WTC11 (cell line): ENCODE measurements at regions of chr5 and their contacts with region 1.

Region 1: DNA sequence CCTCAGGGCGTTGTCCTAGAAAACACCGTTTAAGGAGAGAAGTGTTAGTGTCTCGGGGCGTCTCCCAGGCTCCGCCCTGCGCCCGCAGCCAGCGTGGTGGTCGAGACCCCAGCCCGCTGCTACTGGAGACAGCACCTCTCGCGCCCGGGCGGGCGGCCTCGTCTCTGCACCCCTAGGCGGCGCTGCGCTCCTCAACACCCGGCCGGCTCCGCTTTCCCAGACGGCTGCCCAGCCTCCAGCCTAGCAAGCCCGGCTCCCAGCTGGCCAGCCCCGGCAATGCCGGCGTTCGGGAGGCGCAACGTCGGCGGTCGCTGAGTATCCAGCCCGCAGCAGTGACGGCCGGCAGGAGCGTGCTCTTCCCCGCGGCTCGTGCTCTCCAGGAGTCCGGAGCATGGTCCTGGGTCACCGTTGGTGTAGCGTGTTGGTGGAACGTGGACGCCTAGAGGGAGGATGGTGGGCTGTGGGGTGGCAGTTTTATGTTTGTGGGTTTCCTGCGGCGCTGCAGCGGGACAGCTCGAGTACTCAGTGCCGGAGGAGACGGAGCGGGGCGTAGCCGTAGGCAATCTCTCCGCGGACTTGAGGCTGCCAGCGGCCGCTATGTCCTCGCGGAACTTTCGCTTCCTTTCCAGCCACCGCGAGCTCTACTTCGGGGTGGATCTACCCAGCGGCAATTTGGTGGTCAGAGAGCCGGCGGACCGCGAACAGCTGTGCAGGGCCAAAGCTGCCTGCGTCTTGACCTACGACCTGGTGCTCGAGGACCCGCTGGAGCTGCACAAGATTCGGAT is 536 bp downstream of the PCDHAC1 start:
- DNase-seq: peak; percentile 98
- ATAC-seq: peak; percentile 86
- H3K4me3 Mint-ChIP-seq: peak overlapping the region; percentile 91
- H3K27ac Mint-ChIP-seq: no peak overlapping the region
- H3K4me1 Mint-ChIP-seq: peaks cover 28% of the 10 kb centered on the region
- H3K27me3 Mint-ChIP-seq: peaks cover 37% of the 10 kb centered on the region
- CTCF ChIP-seq: peak; percentile 87; the same call in 1 of the 2 replicates

Region 2: GRCh38 chr5:140677947-140678346 is 248.7 kb before region 1 on chr5:
- CTCF ChIA-PET with region 1: no interaction called
- POLR2A ChIA-PET with region 1: no interaction called
- DNase-seq: no peak
- ATAC-seq: no peak
- H3K4me3 Mint-ChIP-seq: no peak overlapping the region
- H3K27ac Mint-ChIP-seq: no peak overlapping the region
- H3K4me1 Mint-ChIP-seq: no peaks in the 10 kb centered on the region
- H3K27me3 Mint-ChIP-seq: no peaks in the 10 kb centered on the region
- CTCF ChIP-seq: no peak

Region 3: DNA sequence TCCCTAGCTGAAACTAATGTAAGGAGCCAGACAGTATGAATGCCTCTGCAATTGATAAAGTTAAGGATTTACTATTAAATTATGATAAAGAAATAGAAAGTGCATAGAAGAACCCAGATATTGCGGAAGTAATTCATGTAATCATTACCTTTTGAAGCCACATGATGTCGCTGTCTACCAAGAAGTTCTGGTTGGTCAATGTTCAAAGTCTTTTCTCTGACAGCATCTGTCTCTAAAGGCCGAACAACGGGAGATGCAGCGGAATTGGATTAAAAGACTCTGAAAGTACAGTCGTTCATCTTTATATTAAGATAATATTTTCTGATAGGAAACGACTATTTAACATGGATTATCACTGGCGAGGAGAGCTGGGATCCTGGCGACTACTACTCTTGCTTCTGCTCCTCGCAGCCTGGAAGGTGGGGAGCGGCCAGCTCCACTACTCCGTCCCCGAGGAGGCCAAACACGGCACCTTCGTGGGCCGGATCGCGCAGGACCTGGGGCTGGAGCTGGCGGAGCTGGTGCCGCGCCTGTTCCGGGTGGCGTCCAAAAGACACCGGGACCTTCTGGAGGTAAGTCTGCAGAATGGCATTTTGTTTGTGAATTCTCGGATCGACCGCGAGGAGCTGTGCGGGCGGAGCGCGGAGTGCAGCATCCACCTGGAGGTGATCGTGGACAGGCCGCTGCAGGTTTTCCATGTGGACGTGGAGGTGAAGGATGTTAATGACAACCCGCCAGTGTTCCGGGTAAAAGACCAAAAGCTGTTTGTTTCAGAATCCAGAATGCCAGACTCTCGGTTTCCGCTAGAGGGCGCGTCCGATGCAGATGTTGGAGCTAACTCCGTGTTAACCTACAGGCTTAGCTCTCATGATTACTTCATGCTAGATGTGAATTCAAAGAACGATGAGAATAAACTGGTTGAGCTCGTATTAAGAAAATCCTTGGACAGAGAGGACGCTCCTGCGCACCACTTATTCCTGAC is 85.4 kb before region 1 on chr5 and contains the start of gene PCDHA8:
- CTCF ChIA-PET with region 1: interaction called, 11 read pairs
- POLR2A ChIA-PET with region 1: no interaction called
- DNase-seq: peak; percentile 76
- ATAC-seq: peak; percentile 85
- H3K4me3 Mint-ChIP-seq: peak within 1 kb of the TSS; percentile 49
- H3K27ac Mint-ChIP-seq: no peak within 1 kb of the TSS
- H3K4me1 Mint-ChIP-seq: peaks cover 7% of the 10 kb centered on the region; the same call in 1 of the 2 replicates
- H3K27me3 Mint-ChIP-seq: no peaks in the 10 kb centered on the region; the same call in 1 of the 2 replicates
- CTCF ChIP-seq: peak; percentile 65
- total RNA-seq, gene PCDHA8: 0.85 to 1.3 TPM (median 1.3 TPM) in 3 replicates

Region 4: GRCh38 chr5:140875066-140876065 is 51.3 kb before region 1 on chr5 and contains the start of gene PCDHA12:
- CTCF ChIA-PET with region 1: interaction called, 22 read pairs
- POLR2A ChIA-PET with region 1: interaction called, 5 read pairs
- DNase-seq: no peak
- ATAC-seq: peak; percentile 59
- H3K4me3 Mint-ChIP-seq: peak within 1 kb of the TSS; percentile 99
- H3K27ac Mint-ChIP-seq: peak within 1 kb of the TSS; percentile 93
- H3K4me1 Mint-ChIP-seq: peaks cover 28% of the 10 kb centered on the region
- H3K27me3 Mint-ChIP-seq: no peaks in the 10 kb centered on the region
- CTCF ChIP-seq: peak; percentile 42; the same call in 1 of the 2 replicates
- total RNA-seq, gene PCDHA12: 9.6 to 10.7 TPM (median 10.1 TPM) in 3 replicates

Region 5: DNA sequence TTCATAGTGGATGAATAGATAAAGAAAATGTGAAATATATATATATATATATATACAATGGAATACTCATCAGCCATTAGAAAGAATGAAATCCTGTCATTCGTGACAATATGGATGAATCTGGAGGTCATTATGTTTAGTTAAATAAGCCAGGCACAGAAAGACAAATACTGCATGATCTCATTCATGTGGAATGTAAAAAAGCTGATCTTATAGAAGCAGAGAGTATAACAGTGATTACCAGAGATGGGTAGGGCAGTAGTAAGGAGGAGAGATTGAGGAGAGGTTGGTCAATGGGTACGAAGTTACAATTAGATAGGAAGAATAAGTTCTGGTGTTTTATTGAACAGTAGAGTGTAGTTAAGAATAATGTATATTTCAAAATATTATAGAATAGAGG is 19.9 kb after region 1 on chr5:
- CTCF ChIA-PET with region 1: interaction called, 12 read pairs
- POLR2A ChIA-PET with region 1: no interaction called
- DNase-seq: no peak
- ATAC-seq: no peak
- H3K4me3 Mint-ChIP-seq: no peak overlapping the region
- H3K27ac Mint-ChIP-seq: no peak overlapping the region
- H3K4me1 Mint-ChIP-seq: no peaks in the 10 kb centered on the region
- H3K27me3 Mint-ChIP-seq: no peaks in the 10 kb centered on the region
- CTCF ChIP-seq: no peak

Region 6: GRCh38 chr5:141001854-141002604 is 75.4 kb after region 1 on chr5:
- CTCF ChIA-PET with region 1: interaction called, 86 read pairs
- POLR2A ChIA-PET with region 1: interaction called, 12 read pairs
- DNase-seq: peak; percentile 87
- ATAC-seq: peak; percentile 72
- H3K4me3 Mint-ChIP-seq: peak overlapping the region; percentile 85
- H3K27ac Mint-ChIP-seq: peak overlapping the region; percentile 99
- H3K4me1 Mint-ChIP-seq: peaks cover 71% of the 10 kb centered on the region
- H3K27me3 Mint-ChIP-seq: no peaks in the 10 kb centered on the region
- CTCF ChIP-seq: no peak

Region 7: DNA sequence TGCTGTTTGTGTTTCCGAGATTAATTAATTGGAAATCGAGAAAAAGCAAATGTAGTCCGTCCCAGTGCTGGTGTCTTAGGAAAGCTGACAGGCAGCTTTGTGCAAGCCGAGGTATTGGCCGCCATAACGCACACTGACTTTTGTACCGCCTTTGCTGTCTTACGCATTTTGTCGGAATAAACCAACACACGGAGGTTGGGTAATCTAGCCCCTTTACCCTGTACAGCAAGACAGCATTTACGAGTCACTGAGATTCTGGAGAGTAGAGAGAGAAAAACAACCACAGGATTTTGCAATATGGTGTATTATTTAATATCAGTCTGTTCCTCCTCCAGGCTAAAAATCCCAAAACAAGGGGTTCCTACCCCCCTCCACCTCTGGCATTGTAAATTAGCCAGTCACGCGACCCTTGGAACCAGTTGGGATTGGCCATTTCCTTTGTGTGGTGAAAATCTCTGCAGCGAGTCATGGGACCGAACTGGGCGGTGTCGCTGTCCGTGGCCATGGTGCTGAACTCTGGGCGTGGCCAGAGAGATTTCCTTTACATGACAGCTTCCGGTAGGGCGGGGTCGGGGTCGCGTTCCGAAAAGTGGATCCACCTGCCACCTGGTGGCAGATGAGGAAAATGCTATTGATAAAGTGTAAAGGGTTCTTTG is 114.3 kb after region 1 on chr5:
- CTCF ChIA-PET with region 1: interaction called, 243 read pairs
- POLR2A ChIA-PET with region 1: interaction called, 50 read pairs
- DNase-seq: peak; percentile 99
- ATAC-seq: peak; percentile 88
- H3K4me3 Mint-ChIP-seq: no peak overlapping the region
- H3K27ac Mint-ChIP-seq: no peak overlapping the region
- H3K4me1 Mint-ChIP-seq: peaks cover 4% of the 10 kb centered on the region
- H3K27me3 Mint-ChIP-seq: peaks cover 8% of the 10 kb centered on the region
- CTCF ChIP-seq: peak; percentile 81

Region 8: DNA sequence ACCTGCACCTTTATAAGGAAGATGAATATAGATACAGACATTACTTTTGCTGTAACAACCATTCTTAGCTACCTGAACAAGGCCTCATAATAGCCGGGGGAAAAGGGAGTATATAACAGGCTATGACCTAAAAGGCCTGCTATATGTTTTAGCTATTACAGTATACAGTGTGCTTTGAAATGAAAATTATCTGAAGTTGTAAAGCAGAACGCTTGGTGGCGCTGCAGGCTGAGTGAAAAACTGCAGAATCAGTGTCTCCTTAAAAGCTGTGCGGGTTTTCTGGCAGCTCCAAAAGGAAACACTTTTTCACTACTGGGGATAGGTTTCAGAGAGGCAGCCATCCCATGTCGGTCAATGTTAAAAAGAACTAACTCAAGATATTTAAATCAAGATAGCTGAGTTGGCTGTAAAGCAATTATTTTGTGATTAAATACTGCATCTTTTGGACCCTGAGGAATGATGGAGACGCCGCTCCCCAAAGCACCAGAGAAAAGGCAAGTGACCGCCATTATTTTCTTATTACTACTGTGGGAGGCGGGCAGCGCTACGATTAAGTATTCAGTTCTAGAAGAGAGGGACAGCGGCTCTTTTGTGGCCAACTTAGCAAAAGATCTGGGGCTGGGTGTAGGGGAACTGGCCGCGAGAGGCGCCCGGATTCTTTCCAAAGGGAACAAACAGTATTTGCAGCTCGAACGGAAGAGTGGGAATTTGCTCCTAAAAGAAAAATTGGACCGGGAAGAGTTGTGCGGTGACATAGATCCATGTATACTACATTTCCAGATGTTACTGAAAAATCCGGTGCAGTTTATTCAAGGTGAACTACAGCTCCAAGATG is 229.1 kb after region 1 on chr5:
- CTCF ChIA-PET with region 1: interaction called, 10 read pairs
- POLR2A ChIA-PET with region 1: no interaction called
- DNase-seq: peak; percentile 61
- ATAC-seq: peak; percentile 84
- H3K4me3 Mint-ChIP-seq: peak overlapping the region; percentile 49
- H3K27ac Mint-ChIP-seq: no peak overlapping the region
- H3K4me1 Mint-ChIP-seq: 0 out of 2 replicates have a peak, but pooled peaks cover 5% of the 10 kb centered on the region
- H3K27me3 Mint-ChIP-seq: no peaks in the 10 kb centered on the region
- CTCF ChIP-seq: peak; percentile 55